ENCODE measurements at regions of chr21 and their contacts with region 1.

Region 1: GRCh38 chr21:39125752-39126485 is 57.3 kb downstream of the PSMG1 start:
- DNase-seq: peak in 1 of 2 donors; percentile 84
- H3K4me3 ChIP-seq: no peak overlapping the region
- H3K27ac ChIP-seq: peak overlapping the region in 1 of 2 donors; percentile 81
- H3K4me1 ChIP-seq: no peaks in the 10 kb centered on the region
- H3K27me3 ChIP-seq: no peaks in the 10 kb centered on the region
- CTCF ChIP-seq: peak; percentile 54 to 79 (median 76)

Region 2: GRCh38 chr21:38925923-38926322 is 200.0 kb before region 1 on chr21:
- intact Hi-C with region 1: loop called (anchors 10 kb)
- DNase-seq: peak; percentile 42 to 88
- H3K4me3 ChIP-seq: peak overlapping the region; percentile 49 to 54
- H3K27ac ChIP-seq: peak overlapping the region; percentile 93 to 94
- H3K4me1 ChIP-seq: peaks cover 8 to 35% of the 10 kb centered on the region in 2 donors
- H3K27me3 ChIP-seq: no peaks in the 10 kb centered on the region
- CTCF ChIP-seq: no peak

Region 3: GRCh38 chr21:39168800-39169199 is 42.9 kb after region 1 on chr21:
- intact Hi-C with region 1: no loop called
- DNase-seq: no peak
- H3K4me3 ChIP-seq: no peak overlapping the region
- H3K27ac ChIP-seq: no peak overlapping the region
- H3K4me1 ChIP-seq: no peaks in the 10 kb centered on the region
- H3K27me3 ChIP-seq: no peaks in the 10 kb centered on the region
- CTCF ChIP-seq: no peak

Measured in ascending aorta (tissue), 2 donors.